ENCODE measurements at regions of chr9 and their contacts with region 1.

Region 1: GRCh38 chr9:126781186-126782052 is 23.4 kb upstream of the ZBTB43 start:
- DNase-seq: peak; percentile 88
- ATAC-seq: peak; percentile 96
- H3K4me3 Mint-ChIP-seq: no peak overlapping the region
- H3K27ac Mint-ChIP-seq: no peak overlapping the region
- H3K4me1 Mint-ChIP-seq: no peaks in the 10 kb centered on the region
- H3K27me3 Mint-ChIP-seq: peaks cover 14% of the 10 kb centered on the region
- CTCF ChIP-seq: peak; percentile 97

Region 2: GRCh38 chr9:126611592-126612325 is 169.7 kb before region 1 on chr9:
- CTCF ChIA-PET with region 1: interaction called, 8 read pairs
- POLR2A ChIA-PET with region 1: no interaction called
- intact Hi-C with region 1: loop called (anchors 5 kb)
- DNase-seq: peak; percentile 80
- ATAC-seq: peak; percentile 90
- H3K4me3 Mint-ChIP-seq: peak overlapping the region; percentile 1
- H3K27ac Mint-ChIP-seq: no peak overlapping the region
- H3K4me1 Mint-ChIP-seq: peaks cover 20% of the 10 kb centered on the region
- H3K27me3 Mint-ChIP-seq: peaks cover 68% of the 10 kb centered on the region
- CTCF ChIP-seq: peak; percentile 92

Region 3: GRCh38 chr9:126733005-126733404 is 48.4 kb before region 1 on chr9:
- CTCF ChIA-PET with region 1: interaction called, 14 read pairs
- POLR2A ChIA-PET with region 1: no interaction called
- intact Hi-C with region 1: no loop called
- DNase-seq: no peak
- ATAC-seq: no peak
- H3K4me3 Mint-ChIP-seq: no peak overlapping the region
- H3K27ac Mint-ChIP-seq: no peak overlapping the region
- H3K4me1 Mint-ChIP-seq: no peaks in the 10 kb centered on the region
- H3K27me3 Mint-ChIP-seq: no peaks in the 10 kb centered on the region
- CTCF ChIP-seq: no peak

Region 4: DNA sequence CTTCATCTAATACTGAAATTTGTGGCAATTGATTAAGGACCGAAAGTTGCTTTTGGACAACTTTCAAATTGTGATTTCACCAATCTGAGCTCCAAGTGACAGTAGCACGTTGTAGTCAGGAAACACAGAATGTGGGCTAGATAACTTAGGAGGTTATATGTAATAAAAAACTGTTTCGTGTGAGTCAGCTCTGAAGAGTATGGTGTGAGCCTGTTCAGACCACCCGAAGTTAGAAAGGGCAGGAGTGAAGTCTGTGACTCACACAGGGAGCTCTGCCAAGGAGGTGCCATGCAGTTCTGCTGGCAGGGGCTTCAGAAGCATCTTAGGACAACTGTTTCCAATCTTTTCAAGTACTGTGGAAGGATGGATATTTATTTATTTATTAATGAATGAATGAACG is 62.7 kb after region 1 on chr9:
- CTCF ChIA-PET with region 1: no interaction called
- POLR2A ChIA-PET with region 1: no interaction called
- intact Hi-C with region 1: no loop called
- DNase-seq: no peak
- ATAC-seq: peak; percentile 55
- H3K4me3 Mint-ChIP-seq: no peak overlapping the region
- H3K27ac Mint-ChIP-seq: no peak overlapping the region
- H3K4me1 Mint-ChIP-seq: peaks cover 16% of the 10 kb centered on the region
- H3K27me3 Mint-ChIP-seq: peaks cover 2% of the 10 kb centered on the region
- CTCF ChIP-seq: no peak

Region 5: DNA sequence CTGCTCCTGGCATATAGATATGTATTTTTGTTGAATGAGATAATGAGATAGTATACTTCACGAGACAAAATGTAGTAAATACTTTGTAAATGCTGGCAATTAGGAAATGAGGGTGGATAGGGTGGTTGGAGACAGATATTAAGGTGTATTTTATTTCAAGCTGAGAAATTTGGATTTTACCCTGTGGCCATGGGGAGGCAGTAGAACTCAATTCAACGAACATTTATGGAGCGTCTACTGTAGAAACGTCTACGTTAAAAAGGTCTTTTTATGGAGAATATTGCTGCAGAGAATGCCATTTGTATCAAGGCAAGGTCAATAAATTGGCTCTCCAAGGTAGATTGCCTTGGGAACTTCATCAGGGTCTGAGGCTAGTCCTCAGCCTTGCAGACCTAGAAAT is 111.7 kb after region 1 on chr9:
- CTCF ChIA-PET with region 1: no interaction called
- POLR2A ChIA-PET with region 1: no interaction called
- intact Hi-C with region 1: no loop called
- DNase-seq: peak; percentile 17
- ATAC-seq: no peak
- H3K4me3 Mint-ChIP-seq: no peak overlapping the region
- H3K27ac Mint-ChIP-seq: no peak overlapping the region
- H3K4me1 Mint-ChIP-seq: peaks cover 5% of the 10 kb centered on the region
- H3K27me3 Mint-ChIP-seq: peaks cover 9% of the 10 kb centered on the region
- CTCF ChIP-seq: no peak

Measured in activated CD8-positive, alpha-beta T cell treated with anti-CD3 and anti-CD28 coated beads for 36 hours (primary cell).